ENCODE measurements at regions of chr2 and their contacts with region 1.

Region 1: GRCh38 chr2:43495727-43496126 is 100.1 kb downstream of the THADA start:
- DNase-seq: no peak
- H3K4me3 ChIP-seq: no peak overlapping the region
- H3K4me3 Mint-ChIP-seq: no peak overlapping the region
- H3K27ac ChIP-seq: no peak overlapping the region
- H3K27ac Mint-ChIP-seq: no peak overlapping the region
- H3K4me1 ChIP-seq: no peaks in the 10 kb centered on the region
- H3K4me1 Mint-ChIP-seq: peaks cover 5% of the 10 kb centered on the region
- H3K27me3 ChIP-seq: no peaks in the 10 kb centered on the region
- H3K27me3 Mint-ChIP-seq: no peaks in the 10 kb centered on the region
- CTCF ChIP-seq: no peak

Region 2: DNA sequence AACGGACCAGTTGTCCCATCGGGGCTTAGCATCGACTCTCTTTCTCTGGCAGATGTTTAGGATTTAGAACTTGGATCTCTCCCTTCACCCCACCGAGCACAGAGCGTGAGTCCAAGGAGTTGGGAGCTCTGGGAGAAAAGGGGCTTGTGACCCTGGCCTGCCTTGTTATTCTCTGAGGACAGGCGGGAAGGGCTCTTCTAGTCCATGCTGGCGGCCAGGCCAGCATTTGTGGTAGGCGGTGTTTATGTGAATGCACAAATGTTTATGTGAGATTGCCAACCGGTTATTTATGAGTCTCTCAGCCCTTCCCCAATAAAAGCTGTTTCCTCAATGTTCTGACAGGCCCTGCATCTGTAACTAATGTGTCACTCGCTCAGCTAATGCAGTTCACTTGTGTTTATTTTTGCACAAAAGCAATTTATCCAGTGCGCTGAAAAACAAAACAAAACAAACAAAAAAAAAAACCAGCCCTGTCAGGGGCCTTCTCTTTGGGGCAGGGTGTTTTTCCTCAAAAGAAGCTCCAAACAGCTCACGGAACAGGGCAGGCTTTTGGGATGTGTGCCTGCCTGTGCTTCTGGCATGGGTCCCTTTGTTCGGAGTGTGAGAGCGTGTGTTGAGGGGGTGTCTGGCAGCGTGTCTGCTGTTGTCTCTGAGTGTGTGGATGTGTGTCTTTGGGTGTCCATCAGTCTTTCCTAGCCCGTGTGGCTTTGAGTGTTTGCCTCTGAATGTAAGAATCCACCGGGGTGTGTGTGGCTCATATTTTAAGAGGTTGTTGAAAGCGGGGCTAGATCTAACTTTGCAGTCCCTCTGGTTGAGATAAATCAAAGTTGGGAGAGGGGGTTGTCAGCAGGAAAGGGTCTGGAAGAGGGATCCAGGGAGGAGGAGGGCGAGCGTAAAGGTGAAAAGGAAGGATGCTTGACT is 650.6 kb before region 1 on chr2:
- intact Hi-C with region 1: loop called in 1 of 2 experiments (anchors 10 kb)
- DNase-seq: no peak
- H3K4me3 ChIP-seq: no peak overlapping the region
- H3K4me3 Mint-ChIP-seq: no peak overlapping the region
- H3K27ac ChIP-seq: no peak overlapping the region
- H3K27ac Mint-ChIP-seq: no peak overlapping the region
- H3K4me1 ChIP-seq: no peaks in the 10 kb centered on the region
- H3K4me1 Mint-ChIP-seq: peaks cover 3% of the 10 kb centered on the region
- H3K27me3 ChIP-seq: no peaks in the 10 kb centered on the region
- H3K27me3 Mint-ChIP-seq: peaks cover 2 to 5% (median 3%) of the 10 kb centered on the region in 3 donors
- CTCF ChIP-seq: no peak

Measured in CD14-positive monocyte (primary cell).